CD4-positive, alpha-beta T cell (primary cell): ENCODE measurements at regions of chr5 and their contacts with region 1.

Region 1: GRCh38 chr5:133051580-133052332 is at the start of gene HSPA4:
- DNase-seq: peak; percentile 93 to 100 (median 95)
- ATAC-seq: peak; percentile 88
- H3K4me3 ChIP-seq: peak within 1 kb of the TSS; percentile 98
- H3K4me3 Mint-ChIP-seq: peak within 1 kb of the TSS; percentile 100
- H3K27ac ChIP-seq: peak within 1 kb of the TSS; percentile 95 to 99
- H3K27ac Mint-ChIP-seq: peak within 1 kb of the TSS; percentile 100
- H3K4me1 ChIP-seq: peaks cover 40% of the 10 kb centered on the region
- H3K4me1 Mint-ChIP-seq: peaks cover 64% of the 10 kb centered on the region
- H3K27me3 ChIP-seq: no peaks in the 10 kb centered on the region
- H3K27me3 Mint-ChIP-seq: no peaks in the 10 kb centered on the region
- CTCF ChIP-seq: no peak
- total RNA-seq, gene HSPA4: 42.2 to 44.7 TPM

Region 2: GRCh38 chr5:132736853-132737833 is 314.6 kb before region 1 on chr5 and contains the start of gene KIF3A:
- CTCF ChIA-PET with region 1: no interaction called
- POLR2A ChIA-PET with region 1: interaction called, 7 read pairs
- intact Hi-C with region 1: loop called in 1 of 2 experiments (anchors 5 kb)
- DNase-seq: peak; percentile 96 to 100 (median 98)
- ATAC-seq: peak; percentile 86
- H3K4me3 ChIP-seq: peak within 1 kb of the TSS; percentile 79
- H3K4me3 Mint-ChIP-seq: peak within 1 kb of the TSS; percentile 87
- H3K27ac ChIP-seq: peak within 1 kb of the TSS; percentile 74 to 81
- H3K27ac Mint-ChIP-seq: peak within 1 kb of the TSS; percentile 76
- H3K4me1 ChIP-seq: peaks cover 16% of the 10 kb centered on the region
- H3K4me1 Mint-ChIP-seq: peaks cover 31% of the 10 kb centered on the region
- H3K27me3 ChIP-seq: no peaks in the 10 kb centered on the region
- H3K27me3 Mint-ChIP-seq: no peaks in the 10 kb centered on the region
- CTCF ChIP-seq: peak; percentile 32
- total RNA-seq, gene KIF3A: 10.2 to 12.4 TPM

Region 3: GRCh38 chr5:132963175-132964104 is 88.3 kb before region 1 on chr5 and contains the start of gene AFF4:
- CTCF ChIA-PET with region 1: interaction called, 5 read pairs
- POLR2A ChIA-PET with region 1: interaction called, 97 read pairs
- intact Hi-C with region 1: loop called (anchors 2 kb)
- DNase-seq: peak; percentile 67 to 95 (median 80)
- ATAC-seq: peak; percentile 74
- H3K4me3 ChIP-seq: peak within 1 kb of the TSS; percentile 65
- H3K4me3 Mint-ChIP-seq: peak within 1 kb of the TSS; percentile 99
- H3K27ac ChIP-seq: peak within 1 kb of the TSS; percentile 92 to 96
- H3K27ac Mint-ChIP-seq: peak within 1 kb of the TSS; percentile 97
- H3K4me1 ChIP-seq: peaks cover 26% of the 10 kb centered on the region
- H3K4me1 Mint-ChIP-seq: peaks cover 39% of the 10 kb centered on the region
- H3K27me3 ChIP-seq: no peaks in the 10 kb centered on the region
- H3K27me3 Mint-ChIP-seq: no peaks in the 10 kb centered on the region
- CTCF ChIP-seq: no peak
- total RNA-seq, gene AFF4: 97.9 to 103 TPM

Region 4: GRCh38 chr5:133062276-133062675 is 10.5 kb after region 1 on chr5:
- CTCF ChIA-PET with region 1: no interaction called
- POLR2A ChIA-PET with region 1: interaction called, 11 read pairs
- intact Hi-C with region 1: no loop called
- DNase-seq: no peak
- ATAC-seq: no peak
- H3K4me3 ChIP-seq: no peak overlapping the region
- H3K4me3 Mint-ChIP-seq: no peak overlapping the region
- H3K27ac ChIP-seq: no peak overlapping the region
- H3K27ac Mint-ChIP-seq: peak overlapping the region; percentile 56
- H3K4me1 ChIP-seq: peaks cover 29% of the 10 kb centered on the region
- H3K4me1 Mint-ChIP-seq: peaks cover 50% of the 10 kb centered on the region
- H3K27me3 ChIP-seq: no peaks in the 10 kb centered on the region
- H3K27me3 Mint-ChIP-seq: no peaks in the 10 kb centered on the region
- CTCF ChIP-seq: no peak

Region 5: DNA sequence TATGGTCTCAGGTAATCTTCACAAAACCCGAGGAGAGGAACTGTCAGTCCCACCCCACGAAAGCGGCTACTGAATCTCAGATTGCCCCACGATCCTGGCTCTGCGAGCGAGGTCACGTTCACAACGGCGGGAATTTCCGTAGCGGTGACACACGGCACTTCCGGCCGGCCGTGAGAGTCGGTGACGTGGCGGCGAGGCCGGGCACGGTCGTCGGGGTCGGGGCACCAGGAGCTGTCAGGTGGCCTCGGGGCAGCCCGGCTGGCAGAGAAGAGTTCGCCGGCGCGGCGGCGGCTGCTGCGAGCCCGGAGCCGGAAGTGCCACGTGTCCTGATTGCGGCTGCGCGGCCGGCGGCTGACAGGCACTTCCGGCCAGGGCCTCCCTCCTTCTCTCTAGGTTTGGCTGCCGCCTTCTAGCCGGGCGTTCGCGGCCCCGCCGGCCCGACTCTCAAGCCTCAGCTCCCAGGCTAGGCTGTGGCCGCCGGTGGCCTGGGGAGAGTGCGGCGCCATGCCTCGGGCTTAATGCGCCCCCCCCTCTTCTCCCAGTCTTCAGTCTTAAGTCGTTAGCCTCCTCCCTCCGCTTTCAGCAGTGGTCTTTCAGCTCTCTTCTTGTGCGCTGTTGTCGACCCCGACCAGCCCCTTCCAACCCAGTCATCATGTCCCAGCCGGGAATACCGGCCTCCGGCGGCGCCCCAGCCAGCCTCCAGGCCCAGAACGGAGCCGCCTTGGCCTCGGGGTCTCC is 1596.8 kb after region 1 on chr5 and contains the start of gene SEC24A:
- CTCF ChIA-PET with region 1: no interaction called
- POLR2A ChIA-PET with region 1: no interaction called
- intact Hi-C with region 1: loop called in 1 of 2 experiments (anchors 10 kb)
- DNase-seq: peak; percentile 74 to 98 (median 82)
- ATAC-seq: peak; percentile 78
- H3K4me3 ChIP-seq: peak within 1 kb of the TSS; percentile 80
- H3K4me3 Mint-ChIP-seq: peak within 1 kb of the TSS; percentile 99
- H3K27ac ChIP-seq: peak within 1 kb of the TSS; percentile 93 to 98
- H3K27ac Mint-ChIP-seq: peak within 1 kb of the TSS; percentile 95
- H3K4me1 ChIP-seq: peaks cover 27% of the 10 kb centered on the region
- H3K4me1 Mint-ChIP-seq: peaks cover 31% of the 10 kb centered on the region
- H3K27me3 ChIP-seq: no peaks in the 10 kb centered on the region
- H3K27me3 Mint-ChIP-seq: no peaks in the 10 kb centered on the region
- CTCF ChIP-seq: no peak
- total RNA-seq, gene SEC24A: 11.7 to 12.3 TPM